MCF 10A (cell line): ENCODE measurements at regions of chr3 and their contacts with region 1.

Region 1: GRCh38 chr3:61561374-61562041 is at the start of gene PTPRG:
- DNase-seq: peak; percentile 94
- H3K4me3 Mint-ChIP-seq: peak within 1 kb of the TSS; percentile 91
- H3K27ac Mint-ChIP-seq: peak within 1 kb of the TSS; percentile 94
- H3K4me1 Mint-ChIP-seq: peaks cover 19% of the 10 kb centered on the region
- H3K27me3 Mint-ChIP-seq: no peaks in the 10 kb centered on the region
- CTCF ChIP-seq: no peak
- total RNA-seq, gene PTPRG: 47.9 and 54.5 TPM in 2 replicates

Region 2: GRCh38 chr3:61538486-61538885 is 23.0 kb before region 1 on chr3:
- CTCF ChIA-PET with region 1: no interaction called
- POLR2A ChIA-PET with region 1: no interaction called
- intact Hi-C with region 1: no loop called
- DNase-seq: no peak
- H3K4me3 Mint-ChIP-seq: no peak overlapping the region
- H3K27ac Mint-ChIP-seq: no peak overlapping the region
- H3K4me1 Mint-ChIP-seq: no peaks in the 10 kb centered on the region
- H3K27me3 Mint-ChIP-seq: no peaks in the 10 kb centered on the region
- CTCF ChIP-seq: no peak

Region 3: GRCh38 chr3:61574854-61575253 is 13.3 kb after region 1 on chr3:
- CTCF ChIA-PET with region 1: interaction called, 9 read pairs
- POLR2A ChIA-PET with region 1: interaction called, 76 read pairs
- intact Hi-C with region 1: no loop called
- DNase-seq: peak; percentile 99
- H3K4me3 Mint-ChIP-seq: peak overlapping the region; percentile 61
- H3K27ac Mint-ChIP-seq: peak overlapping the region; percentile 96
- H3K4me1 Mint-ChIP-seq: peaks cover 62% of the 10 kb centered on the region
- H3K27me3 Mint-ChIP-seq: no peaks in the 10 kb centered on the region
- CTCF ChIP-seq: no peak

Region 4: GRCh38 chr3:61682671-61683548 is 121.4 kb after region 1 on chr3:
- CTCF ChIA-PET with region 1: interaction called, 5 read pairs
- POLR2A ChIA-PET with region 1: interaction called, 22 read pairs
- intact Hi-C with region 1: loop called (anchors 5 kb)
- DNase-seq: peak; percentile 48
- H3K4me3 Mint-ChIP-seq: no peak overlapping the region
- H3K27ac Mint-ChIP-seq: peak overlapping the region; percentile 65
- H3K4me1 Mint-ChIP-seq: peaks cover 50% of the 10 kb centered on the region
- H3K27me3 Mint-ChIP-seq: no peaks in the 10 kb centered on the region
- CTCF ChIP-seq: no peak

Region 5: DNA sequence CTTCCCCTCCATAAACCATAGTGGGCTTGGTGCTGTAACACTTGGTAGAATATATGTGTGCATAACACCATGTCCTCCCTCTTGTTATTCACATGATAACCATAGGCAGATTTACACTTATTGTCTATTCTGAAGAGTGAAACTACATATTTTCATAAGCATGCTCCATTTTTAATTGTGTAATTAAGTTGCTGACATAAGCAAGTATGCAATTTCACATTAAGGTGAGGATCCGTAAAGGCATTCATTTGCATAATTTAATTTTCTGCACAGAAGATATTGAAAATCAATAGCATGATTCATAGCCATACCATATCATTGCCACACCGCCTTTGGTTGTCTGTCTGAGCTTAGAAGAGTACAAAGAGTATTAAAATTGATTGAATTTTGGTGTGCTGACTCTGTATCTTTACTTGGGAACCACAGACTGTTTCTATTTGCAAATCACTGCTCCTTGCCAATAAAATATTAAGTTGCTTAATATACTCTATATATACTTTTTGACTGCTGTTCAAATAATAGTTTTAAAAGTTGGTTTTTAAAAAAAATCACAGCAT is 182.3 kb after region 1 on chr3:
- CTCF ChIA-PET with region 1: no interaction called
- POLR2A ChIA-PET with region 1: no interaction called
- intact Hi-C with region 1: no loop called
- DNase-seq: no peak
- H3K4me3 Mint-ChIP-seq: no peak overlapping the region
- H3K27ac Mint-ChIP-seq: no peak overlapping the region
- H3K4me1 Mint-ChIP-seq: no peaks in the 10 kb centered on the region
- H3K27me3 Mint-ChIP-seq: no peaks in the 10 kb centered on the region
- CTCF ChIP-seq: no peak

Region 6: GRCh38 chr3:61802772-61803171 is 241.3 kb after region 1 on chr3:
- CTCF ChIA-PET with region 1: no interaction called
- POLR2A ChIA-PET with region 1: no interaction called
- intact Hi-C with region 1: no loop called
- DNase-seq: no peak
- H3K4me3 Mint-ChIP-seq: no peak overlapping the region
- H3K27ac Mint-ChIP-seq: no peak overlapping the region
- H3K4me1 Mint-ChIP-seq: peaks cover 8% of the 10 kb centered on the region
- H3K27me3 Mint-ChIP-seq: no peaks in the 10 kb centered on the region
- CTCF ChIP-seq: no peak

Region 7: GRCh38 chr3:61858056-61858455 is 296.5 kb after region 1 on chr3:
- CTCF ChIA-PET with region 1: interaction called, 5 read pairs
- POLR2A ChIA-PET with region 1: no interaction called
- intact Hi-C with region 1: loop called (anchors 5 kb)
- DNase-seq: peak; percentile 39
- H3K4me3 Mint-ChIP-seq: no peak overlapping the region
- H3K27ac Mint-ChIP-seq: no peak overlapping the region
- H3K4me1 Mint-ChIP-seq: peaks cover 25% of the 10 kb centered on the region
- H3K27me3 Mint-ChIP-seq: no peaks in the 10 kb centered on the region
- CTCF ChIP-seq: peak; percentile 41

Region 8: DNA sequence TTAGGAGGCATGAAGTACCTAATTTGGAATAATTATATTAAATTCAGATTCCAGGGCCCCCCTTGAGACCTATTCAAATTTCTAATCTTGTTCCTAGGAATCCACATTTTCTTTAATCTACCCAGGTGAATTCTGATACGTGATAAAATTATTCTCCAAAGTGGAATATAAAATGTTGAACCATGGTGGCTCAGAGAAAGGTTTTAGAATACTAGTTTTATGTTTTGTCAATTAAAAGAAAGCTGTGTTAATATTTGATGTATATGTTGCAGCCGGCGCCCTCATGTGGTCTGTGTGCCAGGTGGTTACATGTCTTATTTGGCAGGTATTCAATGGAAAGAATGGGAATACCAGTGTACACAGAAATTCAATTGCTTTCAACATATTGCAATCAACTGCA is 490.0 kb after region 1 on chr3:
- CTCF ChIA-PET with region 1: interaction called, 4 read pairs
- POLR2A ChIA-PET with region 1: no interaction called
- intact Hi-C with region 1: loop called (anchors 5 kb)
- DNase-seq: peak; percentile 65
- H3K4me3 Mint-ChIP-seq: no peak overlapping the region
- H3K27ac Mint-ChIP-seq: no peak overlapping the region
- H3K4me1 Mint-ChIP-seq: peaks cover under 1% of the 10 kb centered on the region
- H3K27me3 Mint-ChIP-seq: no peaks in the 10 kb centered on the region
- CTCF ChIP-seq: peak; percentile 27